Activated CD8-positive, alpha-beta T cell treated with anti-CD3 and anti-CD28 coated beads for 36 hours (primary cell): ENCODE measurements at regions of chr6 and their contacts with region 1.

Region 1: DNA sequence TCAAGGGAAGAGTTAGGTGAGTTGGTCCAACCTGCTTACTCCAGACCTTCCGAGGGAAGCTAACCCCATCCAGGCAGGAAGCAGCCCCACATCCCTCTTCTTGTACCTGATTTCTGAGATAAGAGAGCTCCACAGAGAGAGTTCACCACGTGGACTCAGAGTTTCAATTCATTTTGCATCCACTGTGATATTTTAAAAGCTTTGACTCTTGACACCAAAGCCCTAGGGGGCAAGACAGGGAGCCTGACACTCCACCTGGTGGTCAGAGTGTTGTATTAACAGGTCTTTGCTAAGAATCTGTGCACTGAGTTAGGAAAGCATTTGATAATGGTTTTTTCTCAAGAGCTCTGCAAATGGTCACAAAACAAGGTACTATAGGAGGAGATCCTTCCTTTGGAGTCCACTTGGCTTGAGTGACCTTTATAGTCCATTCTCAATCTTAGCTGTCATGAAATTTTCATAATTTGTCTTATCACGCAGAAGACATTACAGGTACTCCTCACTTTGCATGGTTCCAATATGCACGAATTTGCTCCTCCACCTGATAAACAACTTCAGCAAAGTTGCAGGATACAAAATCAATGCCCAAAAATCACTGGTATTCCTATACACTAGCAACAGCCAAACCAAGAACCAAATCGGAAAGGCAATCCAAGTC is 56.2 kb upstream of the RIPOR2 start:
- DNase-seq: peak; percentile 79
- ATAC-seq: peak; percentile 94
- H3K4me3 Mint-ChIP-seq: peak overlapping the region; percentile 14
- H3K27ac Mint-ChIP-seq: peak overlapping the region; percentile 89
- H3K4me1 Mint-ChIP-seq: peaks cover 49% of the 10 kb centered on the region
- H3K27me3 Mint-ChIP-seq: no peaks in the 10 kb centered on the region
- CTCF ChIP-seq: peak; percentile 78

Region 2: DNA sequence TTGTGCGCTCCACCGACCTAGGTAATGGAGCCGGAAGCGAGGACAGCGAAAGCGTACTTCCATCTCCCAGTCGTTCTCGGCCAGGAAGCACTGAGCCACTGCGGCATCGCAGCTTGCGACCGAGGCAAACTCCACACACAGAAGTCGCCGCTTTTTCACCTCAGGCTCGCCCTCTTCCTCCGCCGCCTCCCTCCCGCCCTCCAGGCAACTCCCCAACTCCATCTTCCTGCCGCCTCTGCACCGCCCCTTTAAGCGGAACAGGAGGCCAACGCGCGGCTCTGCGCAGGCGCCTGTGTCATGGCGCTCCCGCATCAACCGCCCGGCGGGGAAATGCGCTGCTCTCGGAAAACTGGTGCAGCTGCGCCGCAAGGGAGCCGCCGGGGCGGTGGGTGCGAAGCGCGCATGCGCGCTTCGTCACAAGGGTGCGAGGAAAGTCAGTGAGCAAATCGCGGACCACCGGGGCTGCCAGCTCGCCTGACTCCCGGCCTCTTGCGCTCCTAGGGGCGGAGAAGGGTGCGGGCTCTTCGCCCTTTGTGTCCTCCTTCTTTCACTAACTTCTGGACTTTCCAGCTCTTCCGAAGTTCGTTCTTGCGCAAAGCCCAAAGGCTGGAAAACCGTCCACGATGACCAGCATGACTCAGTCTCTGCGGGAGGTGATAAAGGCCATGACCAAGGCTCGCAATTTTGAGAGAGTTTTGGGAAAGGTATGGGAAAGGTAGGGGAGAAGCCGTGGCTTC is 325.1 kb before region 1 on chr6 and contains the starts of genes ACOT13 and TDP2:
- CTCF ChIA-PET with region 1: no interaction called
- POLR2A ChIA-PET with region 1: no interaction called
- intact Hi-C with region 1: no loop called
- DNase-seq: peak; percentile 96
- ATAC-seq: peak; percentile 95
- H3K4me3 Mint-ChIP-seq: peak within 1 kb of the TSS; percentile 91
- H3K27ac Mint-ChIP-seq: peak within 1 kb of the TSS; percentile 99
- H3K4me1 Mint-ChIP-seq: peaks cover 33% of the 10 kb centered on the region
- H3K27me3 Mint-ChIP-seq: no peaks in the 10 kb centered on the region
- CTCF ChIP-seq: peak; percentile 70
- total RNA-seq, gene ACOT13: 28.9 to 33.6 TPM
- total RNA-seq, gene TDP2: 37.4 to 39.8 TPM

Region 3: GRCh38 chr6:24710519-24711303 is 281.2 kb before region 1 on chr6:
- CTCF ChIA-PET with region 1: no interaction called
- POLR2A ChIA-PET with region 1: no interaction called
- intact Hi-C with region 1: no loop called
- DNase-seq: no peak
- ATAC-seq: no peak
- H3K4me3 Mint-ChIP-seq: no peak overlapping the region
- H3K27ac Mint-ChIP-seq: peak overlapping the region; percentile 74
- H3K4me1 Mint-ChIP-seq: peaks cover 50% of the 10 kb centered on the region
- H3K27me3 Mint-ChIP-seq: no peaks in the 10 kb centered on the region
- CTCF ChIP-seq: no peak

Region 4: DNA sequence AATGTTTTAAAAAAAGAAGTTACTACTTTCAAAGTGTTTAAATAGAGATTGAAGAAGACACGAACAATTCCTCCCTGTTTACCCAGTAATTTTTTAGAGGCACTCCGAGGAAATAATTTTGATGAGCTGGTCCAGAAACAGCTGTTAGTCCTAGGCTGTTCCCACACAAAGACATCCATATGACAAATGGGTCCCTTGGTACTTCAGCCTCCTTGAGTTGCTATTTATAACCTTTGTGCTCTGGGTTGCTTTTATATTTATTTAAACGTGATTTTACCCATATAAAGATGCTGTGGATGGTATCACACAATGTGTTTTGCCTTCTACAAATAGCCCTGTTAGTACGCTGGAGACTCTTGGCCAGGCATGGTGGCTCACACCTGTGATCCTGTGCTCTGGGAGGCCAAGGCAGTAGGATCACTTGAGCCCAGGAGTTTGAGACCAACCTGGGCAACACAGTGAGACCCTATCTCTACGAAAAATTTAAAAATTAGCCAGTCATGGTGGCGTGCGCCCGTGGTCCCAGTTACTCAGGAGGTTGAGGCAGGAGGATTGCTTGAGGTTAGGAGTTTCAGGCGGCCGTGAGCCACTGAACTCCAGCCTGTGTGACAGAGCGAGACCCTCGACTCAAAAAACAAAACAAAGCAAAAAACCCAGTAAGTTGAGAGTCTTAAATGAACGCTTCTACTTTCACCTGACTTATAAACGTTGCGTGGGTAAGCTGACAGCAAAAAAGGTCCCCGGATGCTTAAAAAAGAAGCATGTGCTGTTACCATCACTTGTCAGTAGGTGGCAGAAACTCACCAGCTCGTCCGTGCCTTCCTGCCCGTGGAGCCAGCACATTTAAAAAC is 136.3 kb before region 1 on chr6:
- CTCF ChIA-PET with region 1: interaction called, 125 read pairs
- POLR2A ChIA-PET with region 1: interaction called, 7 read pairs
- intact Hi-C with region 1: loop called (anchors 1 kb)
- DNase-seq: peak; percentile 83
- ATAC-seq: peak; percentile 68
- H3K4me3 Mint-ChIP-seq: peak overlapping the region; percentile 22
- H3K27ac Mint-ChIP-seq: peak overlapping the region; percentile 87
- H3K4me1 Mint-ChIP-seq: peaks cover 61% of the 10 kb centered on the region
- H3K27me3 Mint-ChIP-seq: no peaks in the 10 kb centered on the region
- CTCF ChIP-seq: peak; percentile 88

Region 5: DNA sequence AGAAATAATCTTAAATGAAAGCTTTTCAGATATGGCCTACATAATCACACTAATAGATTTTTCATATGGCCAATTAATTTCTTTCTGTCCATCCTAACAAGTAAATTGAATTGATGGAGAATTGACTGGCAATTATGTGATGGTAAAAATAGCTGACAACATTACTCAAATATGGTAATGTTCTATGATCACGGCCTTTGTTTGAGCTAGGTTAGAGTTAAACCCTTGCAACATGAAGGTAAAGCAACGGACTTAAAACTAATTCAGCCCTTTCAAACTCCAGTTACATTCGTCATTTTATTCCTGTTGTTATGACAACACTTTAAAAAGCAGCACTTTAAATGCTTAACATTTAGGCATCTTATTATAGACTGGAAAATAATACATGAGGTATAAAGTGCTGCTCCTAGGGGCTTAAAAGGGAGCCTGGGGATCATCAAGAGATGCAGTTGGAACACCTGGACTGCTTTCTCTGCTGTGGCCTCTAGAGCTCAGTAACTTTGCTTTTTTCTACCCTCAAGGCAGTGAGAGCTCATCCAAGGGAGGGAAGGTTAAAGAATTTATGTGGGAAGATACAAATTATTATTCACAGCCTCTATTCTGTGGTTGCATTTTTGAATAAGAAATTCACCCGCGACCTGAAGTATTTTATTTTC is 103.1 kb before region 1 on chr6:
- CTCF ChIA-PET with region 1: interaction called, 17 read pairs
- POLR2A ChIA-PET with region 1: interaction called, 3 read pairs
- intact Hi-C with region 1: no loop called
- DNase-seq: no peak
- ATAC-seq: no peak
- H3K4me3 Mint-ChIP-seq: peak overlapping the region; percentile 18
- H3K27ac Mint-ChIP-seq: peak overlapping the region; percentile 88
- H3K4me1 Mint-ChIP-seq: peaks cover 83% of the 10 kb centered on the region
- H3K27me3 Mint-ChIP-seq: no peaks in the 10 kb centered on the region
- CTCF ChIP-seq: peak; percentile 27

Region 6: DNA sequence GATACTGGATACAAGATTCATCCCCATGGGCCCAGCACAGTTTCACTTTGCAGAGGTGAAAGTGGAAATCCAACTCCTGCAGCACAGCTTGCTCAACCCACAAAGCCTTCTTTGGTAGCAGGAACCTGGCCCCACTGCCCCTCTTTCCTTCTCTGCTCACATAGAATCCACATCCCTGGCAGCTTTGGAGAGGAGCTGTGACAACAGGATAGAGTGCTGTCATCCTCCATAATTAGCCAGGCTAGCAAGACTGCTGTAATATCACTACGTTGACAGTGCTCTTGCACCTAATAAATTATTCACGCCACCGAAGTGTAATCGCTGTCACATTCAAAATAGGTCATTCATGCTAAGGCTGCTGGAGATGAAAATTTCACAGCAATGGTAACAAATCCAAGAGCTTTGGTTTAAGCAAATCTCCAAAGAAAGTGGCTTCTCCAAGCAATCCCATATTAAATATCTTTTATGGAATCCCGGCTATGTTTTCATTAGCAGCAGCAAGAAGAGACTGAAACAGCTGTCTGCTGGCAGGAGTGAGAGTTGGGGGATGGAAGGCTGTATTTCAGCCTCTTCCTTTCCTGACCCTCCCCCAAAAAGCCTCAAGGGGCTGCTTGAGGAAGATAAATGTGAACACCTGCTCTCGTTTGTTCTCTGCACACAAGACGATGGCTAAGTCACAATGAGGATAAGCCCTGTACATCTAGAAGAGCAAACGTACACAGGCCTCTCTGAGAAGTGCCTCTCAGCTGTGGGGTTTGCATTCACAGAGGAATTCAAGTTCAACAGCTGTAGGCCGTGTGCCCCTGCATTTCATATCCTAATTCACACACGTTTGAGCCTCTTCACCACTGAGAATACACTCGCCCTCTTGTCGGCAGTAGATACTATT is 72.7 kb before region 1 on chr6:
- CTCF ChIA-PET with region 1: interaction called, 73 read pairs
- POLR2A ChIA-PET with region 1: interaction called, 4 read pairs
- intact Hi-C with region 1: no loop called
- DNase-seq: peak; percentile 46
- ATAC-seq: peak; percentile 11
- H3K4me3 Mint-ChIP-seq: peak overlapping the region; percentile 69
- H3K27ac Mint-ChIP-seq: peak overlapping the region; percentile 94
- H3K4me1 Mint-ChIP-seq: peaks cover 82% of the 10 kb centered on the region
- H3K27me3 Mint-ChIP-seq: no peaks in the 10 kb centered on the region
- CTCF ChIP-seq: no peak

Region 7: GRCh38 chr6:24949020-24949569 is 42.8 kb before region 1 on chr6:
- CTCF ChIA-PET with region 1: interaction called, 37 read pairs
- POLR2A ChIA-PET with region 1: interaction called, 5 read pairs
- intact Hi-C with region 1: no loop called
- DNase-seq: peak; percentile 64
- ATAC-seq: peak; percentile 50
- H3K4me3 Mint-ChIP-seq: peak overlapping the region; percentile 37
- H3K27ac Mint-ChIP-seq: peak overlapping the region; percentile 88
- H3K4me1 Mint-ChIP-seq: peaks cover 70% of the 10 kb centered on the region
- H3K27me3 Mint-ChIP-seq: no peaks in the 10 kb centered on the region
- CTCF ChIP-seq: no peak

Region 8: GRCh38 chr6:24980507-24981387 is 11.2 kb before region 1 on chr6:
- CTCF ChIA-PET with region 1: interaction called, 101 read pairs
- POLR2A ChIA-PET with region 1: interaction called, 3 read pairs
- intact Hi-C with region 1: no loop called
- DNase-seq: no peak
- ATAC-seq: peak; percentile 73
- H3K4me3 Mint-ChIP-seq: no peak overlapping the region
- H3K27ac Mint-ChIP-seq: no peak overlapping the region
- H3K4me1 Mint-ChIP-seq: peaks cover 43% of the 10 kb centered on the region
- H3K27me3 Mint-ChIP-seq: no peaks in the 10 kb centered on the region
- CTCF ChIP-seq: no peak

Region 9: DNA sequence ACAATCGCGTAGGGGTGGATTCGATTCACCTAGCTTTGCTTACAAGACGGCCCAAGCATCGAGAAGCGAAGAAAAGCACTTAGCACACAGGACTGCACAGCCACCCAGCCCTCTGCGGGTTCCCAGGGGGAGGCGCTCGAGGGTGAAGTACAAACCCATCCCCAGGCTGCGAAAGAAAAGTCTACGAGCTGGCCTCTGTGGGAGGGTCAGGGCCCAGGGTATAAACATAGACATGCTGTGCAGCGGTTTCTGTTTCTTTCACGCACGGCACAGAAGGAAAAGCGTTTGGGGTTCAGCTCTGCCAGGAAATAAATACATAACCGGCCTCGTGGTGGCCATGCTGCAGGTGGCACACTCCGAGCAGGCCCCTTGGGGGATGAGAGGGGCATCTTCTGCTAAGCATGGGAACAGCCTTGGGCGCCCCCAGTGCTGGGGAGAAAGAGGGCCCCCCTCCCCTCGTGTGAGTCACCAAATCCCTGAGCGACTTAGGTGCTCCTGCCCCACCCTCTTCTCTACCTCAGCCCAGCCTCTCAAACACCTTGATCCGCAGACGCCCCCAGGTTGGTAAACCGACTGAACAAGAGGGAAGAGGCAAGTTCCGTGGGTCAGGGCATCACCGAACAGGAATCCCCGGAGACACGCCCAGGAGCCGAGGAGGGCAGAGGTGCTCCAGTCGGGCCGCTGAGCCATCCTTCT is 35.4 kb after region 1 on chr6:
- CTCF ChIA-PET with region 1: interaction called, 35 read pairs
- POLR2A ChIA-PET with region 1: interaction called, 4 read pairs
- intact Hi-C with region 1: no loop called
- DNase-seq: peak; percentile 90
- ATAC-seq: peak; percentile 96
- H3K4me3 Mint-ChIP-seq: peak overlapping the region; percentile 65
- H3K27ac Mint-ChIP-seq: peak overlapping the region; percentile 81
- H3K4me1 Mint-ChIP-seq: peaks cover 45% of the 10 kb centered on the region
- H3K27me3 Mint-ChIP-seq: no peaks in the 10 kb centered on the region
- CTCF ChIP-seq: peak; percentile 42